PC-9 (cell line): ENCODE measurements at regions of chr22 and their contacts with region 1.

Region 1: DNA sequence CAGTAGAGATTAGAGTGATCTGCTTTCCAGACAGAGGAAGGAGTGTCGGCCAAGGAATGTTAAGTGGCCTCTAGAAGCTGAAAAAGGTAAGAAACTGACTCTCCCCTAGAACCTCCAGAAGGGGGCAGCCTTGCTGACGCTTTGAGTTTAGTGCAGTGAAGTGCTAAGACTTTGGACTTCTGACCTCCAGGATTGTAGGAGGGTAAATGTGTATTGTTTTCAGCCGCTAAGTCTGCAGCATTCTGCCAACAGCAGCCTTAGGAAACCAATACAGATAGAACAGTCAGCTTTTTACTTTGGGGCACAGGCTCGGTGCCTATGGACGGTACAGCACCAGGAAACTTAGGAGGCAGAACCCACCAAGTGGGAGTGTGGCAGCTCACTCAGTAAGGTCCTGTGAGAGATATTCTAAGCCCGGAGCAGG is 3.6 kb upstream of the TBC1D22A start:
- DNase-seq: peak; percentile 54 to 73
- H3K4me3 ChIP-seq: no peak overlapping the region
- H3K27ac ChIP-seq: no peak overlapping the region
- H3K4me1 ChIP-seq: peaks cover 27% of the 10 kb centered on the region
- H3K27me3 ChIP-seq: no peaks in the 10 kb centered on the region
- CTCF ChIP-seq: peak; percentile 86

Region 2: DNA sequence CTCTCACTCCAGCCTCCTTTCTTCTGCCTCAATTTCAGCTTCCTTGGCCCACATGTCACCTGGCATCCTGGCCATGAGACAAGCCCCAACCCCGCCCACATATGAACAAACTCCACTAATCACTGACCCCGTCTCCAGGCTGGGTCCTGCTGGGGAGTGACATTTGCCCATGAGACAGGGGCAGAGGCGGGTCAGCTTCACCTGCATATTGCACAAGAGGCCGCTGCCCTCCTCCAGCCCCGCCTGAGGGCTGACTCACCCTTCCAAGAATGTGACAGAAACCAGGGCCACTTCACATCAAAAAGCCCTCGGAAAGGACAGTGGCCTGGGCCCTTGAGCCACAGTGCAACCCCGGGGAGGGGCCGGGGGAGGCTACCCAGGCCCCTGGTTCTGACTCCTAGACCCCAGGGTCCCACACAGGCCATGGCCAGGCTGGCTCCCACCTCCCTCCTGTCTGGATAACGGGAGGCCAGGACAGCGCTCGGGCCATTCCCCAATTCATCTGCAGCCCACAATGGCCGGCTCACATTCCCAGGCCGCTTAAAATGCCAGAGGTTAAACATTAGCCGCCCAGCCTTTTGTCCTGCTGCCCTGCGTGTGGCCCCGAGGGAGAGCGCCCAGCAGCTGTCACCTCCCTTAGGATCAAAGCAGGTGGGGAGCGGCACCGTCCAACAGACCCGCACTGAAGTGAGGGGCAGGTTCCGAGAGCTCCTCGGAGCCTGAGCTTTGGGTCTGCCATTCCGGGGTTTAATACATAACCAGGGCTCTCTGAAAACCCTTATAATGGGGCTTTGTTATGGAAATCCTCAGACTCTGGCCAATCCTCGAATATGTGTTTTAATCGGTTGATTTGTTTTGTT is 381.1 kb before region 1 on chr22:
- CTCF ChIA-PET with region 1: no interaction called
- POLR2A ChIA-PET with region 1: no interaction called
- intact Hi-C with region 1: loop called (anchors 5 kb)
- DNase-seq: peak; percentile 94 to 96
- H3K4me3 ChIP-seq: peak overlapping the region; percentile 39; the same call in 1 of the 2 replicates
- H3K27ac ChIP-seq: peak overlapping the region; percentile 95
- H3K4me1 ChIP-seq: peaks cover 67% of the 10 kb centered on the region
- H3K27me3 ChIP-seq: no peaks in the 10 kb centered on the region
- CTCF ChIP-seq: no peak

Region 3: DNA sequence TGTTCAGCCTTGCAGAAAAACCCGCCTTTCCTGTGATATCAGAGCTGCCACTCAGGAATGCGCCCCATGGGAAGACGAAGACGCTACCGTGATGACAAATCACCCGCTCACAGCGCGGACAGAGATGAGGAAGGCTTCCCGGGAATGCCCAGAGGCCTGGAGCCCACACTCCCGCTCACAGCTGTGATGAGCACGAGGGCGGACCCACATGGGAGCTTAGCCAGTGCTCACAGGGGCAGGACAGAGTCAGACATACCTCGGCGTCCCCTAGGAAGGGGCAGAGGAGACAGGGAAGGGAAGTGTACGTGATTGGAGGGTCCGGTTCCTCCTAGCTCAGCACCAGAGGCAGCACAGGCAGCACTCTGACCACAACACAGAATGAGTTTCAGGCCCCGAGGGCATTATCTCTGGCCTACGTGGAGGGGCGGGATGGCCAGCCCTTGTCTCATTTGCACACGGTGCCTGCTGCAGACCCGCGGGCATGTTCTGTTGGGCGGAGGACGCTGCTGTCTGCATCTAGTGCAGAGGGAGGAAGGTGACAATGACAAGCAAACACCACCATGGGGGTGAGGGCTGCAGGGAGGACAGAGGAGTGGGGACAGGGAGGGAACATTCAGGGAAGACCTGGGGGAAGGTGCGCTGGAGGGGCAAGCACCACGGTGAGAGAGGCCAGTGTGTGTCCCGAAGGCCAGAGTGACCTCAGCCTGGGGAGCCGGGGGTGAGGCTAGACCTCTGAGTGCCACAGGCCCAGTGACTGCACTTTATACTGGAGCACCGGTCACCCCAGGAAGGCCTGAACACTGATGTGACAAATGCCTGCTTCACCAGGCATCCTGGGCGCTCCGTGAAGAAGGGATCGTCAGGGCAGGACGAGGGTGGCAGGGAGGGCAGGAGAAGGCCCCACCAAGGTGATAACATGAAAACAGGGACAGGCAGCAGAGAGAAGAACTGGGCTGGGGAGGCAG is 301.1 kb before region 1 on chr22:
- CTCF ChIA-PET with region 1: no interaction called
- POLR2A ChIA-PET with region 1: no interaction called
- intact Hi-C with region 1: loop called (anchors 5 kb)
- DNase-seq: peak; percentile 78 to 88
- H3K4me3 ChIP-seq: no peak overlapping the region
- H3K27ac ChIP-seq: peak overlapping the region; percentile 68
- H3K4me1 ChIP-seq: peaks cover 53% of the 10 kb centered on the region
- H3K27me3 ChIP-seq: no peaks in the 10 kb centered on the region
- CTCF ChIP-seq: no peak

Region 4: DNA sequence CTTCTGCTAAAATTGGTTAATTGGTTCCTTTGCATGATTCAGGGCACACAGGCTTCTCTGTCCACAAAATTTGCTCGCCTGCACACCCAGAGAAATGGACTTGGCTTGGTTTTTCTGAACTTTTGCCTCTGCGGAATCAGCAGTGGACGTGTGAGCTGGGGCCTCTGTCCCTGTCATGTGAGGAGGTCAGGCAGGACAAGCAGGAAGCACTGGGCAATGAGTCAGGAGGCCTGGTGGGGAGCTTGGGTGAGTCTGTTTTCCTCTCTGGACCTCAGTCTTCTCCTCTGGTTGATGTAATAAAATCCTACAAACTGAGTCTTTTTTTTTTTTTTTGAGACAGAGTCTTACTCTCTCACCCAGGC is 211.0 kb before region 1 on chr22:
- CTCF ChIA-PET with region 1: no interaction called
- POLR2A ChIA-PET with region 1: no interaction called
- intact Hi-C with region 1: loop called (anchors 5 kb)
- DNase-seq: peak; percentile 68 to 89
- H3K4me3 ChIP-seq: no peak overlapping the region
- H3K27ac ChIP-seq: peak overlapping the region; percentile 72
- H3K4me1 ChIP-seq: peaks cover 45% of the 10 kb centered on the region
- H3K27me3 ChIP-seq: no peaks in the 10 kb centered on the region
- CTCF ChIP-seq: no peak

Region 5: DNA sequence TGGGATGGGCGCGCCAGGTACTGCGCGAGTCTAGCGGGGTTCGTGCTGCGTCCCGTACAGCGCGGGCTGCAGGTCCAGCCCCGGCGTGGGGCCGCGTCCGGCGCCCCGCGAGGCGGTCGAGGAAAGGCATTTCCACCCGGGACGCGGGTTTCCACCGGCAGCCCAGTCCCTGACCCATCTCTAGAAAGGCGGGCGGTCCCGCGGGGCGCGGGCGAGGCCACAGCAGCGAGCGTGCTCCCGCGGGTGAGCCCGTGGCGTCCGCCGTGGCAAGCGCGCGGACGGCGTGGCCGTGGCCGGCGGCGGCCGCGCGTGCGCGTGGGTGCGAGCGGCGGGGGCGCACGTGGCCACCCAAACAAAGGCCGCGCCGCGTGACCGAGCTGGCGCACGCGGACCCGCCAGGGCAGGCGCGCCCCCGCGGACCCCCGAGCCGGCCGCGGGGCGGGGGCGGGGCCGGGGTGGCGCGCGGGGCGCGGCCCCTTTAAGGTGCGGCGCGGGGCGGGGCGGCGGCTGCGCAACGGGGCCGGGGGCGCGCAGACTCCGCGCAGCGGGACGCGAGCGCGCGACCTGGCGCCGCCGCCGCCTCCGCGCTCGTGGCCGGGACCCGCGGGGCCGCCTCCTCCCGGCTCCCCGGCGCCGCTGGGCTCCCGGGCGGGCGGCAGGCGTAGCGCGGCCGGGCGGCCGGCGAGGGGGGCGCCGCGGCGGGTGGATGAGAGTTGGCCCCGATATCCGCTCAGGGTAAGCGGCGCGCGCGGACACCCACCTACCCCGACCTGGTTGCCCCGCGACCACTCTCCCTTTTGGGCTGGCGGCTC is 182.1 kb before region 1 on chr22:
- CTCF ChIA-PET with region 1: no interaction called
- POLR2A ChIA-PET with region 1: no interaction called
- intact Hi-C with region 1: no loop called
- DNase-seq: peak in 1 of 2 experiments; percentile 61
- H3K4me3 ChIP-seq: peak overlapping the region; percentile 70
- H3K27ac ChIP-seq: peak overlapping the region; percentile 85
- H3K4me1 ChIP-seq: peaks cover 45% of the 10 kb centered on the region
- H3K27me3 ChIP-seq: no peaks in the 10 kb centered on the region
- CTCF ChIP-seq: no peak

Region 6: DNA sequence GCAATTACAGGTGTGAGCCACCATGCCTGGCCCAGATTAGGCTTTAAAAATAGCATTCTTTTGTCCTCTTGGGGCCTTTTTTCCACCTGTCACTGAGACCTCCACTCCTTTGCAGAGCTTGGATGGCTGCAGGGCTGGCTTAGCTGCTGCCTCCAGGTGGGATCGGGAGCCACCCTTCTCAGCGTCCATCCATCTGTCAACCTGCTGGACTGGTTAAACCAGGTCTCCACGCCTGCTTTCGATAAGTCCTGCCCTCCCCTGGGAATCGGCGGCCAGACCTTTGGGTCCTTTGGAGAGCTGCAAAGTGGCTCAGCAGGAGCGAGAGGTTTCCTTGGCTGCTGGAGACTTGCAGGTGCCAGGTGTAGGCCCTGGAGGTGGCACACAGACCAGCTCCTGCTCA is 162.1 kb before region 1 on chr22:
- CTCF ChIA-PET with region 1: no interaction called
- POLR2A ChIA-PET with region 1: no interaction called
- intact Hi-C with region 1: loop called (anchors 5 kb)
- DNase-seq: peak; percentile 89 to 96
- H3K4me3 ChIP-seq: no peak overlapping the region
- H3K27ac ChIP-seq: peak overlapping the region; percentile 46
- H3K4me1 ChIP-seq: peaks cover 33% of the 10 kb centered on the region
- H3K27me3 ChIP-seq: no peaks in the 10 kb centered on the region
- CTCF ChIP-seq: peak; percentile 74

Region 7: DNA sequence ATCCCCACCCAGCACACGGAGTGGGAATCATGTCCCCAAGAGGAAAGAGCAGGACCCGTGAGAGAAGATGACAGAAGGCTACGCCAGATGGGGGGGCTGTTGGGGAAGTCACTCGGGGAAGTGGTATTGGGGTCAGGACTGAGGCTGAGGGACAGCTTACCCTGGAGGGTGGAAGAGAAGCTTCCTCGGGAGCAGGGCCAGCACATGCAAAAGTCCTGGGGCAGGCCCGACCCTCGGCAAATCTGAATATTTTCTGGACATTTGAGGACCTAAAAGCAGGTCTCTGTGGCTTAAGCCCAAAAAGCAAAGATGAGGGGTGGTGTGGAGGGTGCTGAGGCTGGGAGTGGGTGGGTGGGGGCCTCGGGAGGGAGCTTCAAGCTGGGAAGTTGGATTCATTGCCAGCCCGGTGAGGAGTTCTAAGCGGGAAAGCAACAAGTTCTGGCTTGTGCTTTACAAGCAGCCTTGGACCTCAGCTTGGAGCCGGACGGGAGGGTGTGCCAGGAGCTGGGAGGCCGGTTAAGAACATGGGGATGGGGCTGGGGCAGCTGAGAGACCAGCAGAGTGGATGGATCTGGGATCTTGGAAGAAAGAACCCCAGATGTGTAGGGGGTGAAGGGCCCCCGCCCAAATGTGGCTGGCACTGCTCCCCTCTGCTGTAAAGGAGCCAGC is 103.8 kb before region 1 on chr22:
- CTCF ChIA-PET with region 1: no interaction called
- POLR2A ChIA-PET with region 1: interaction called, 14 read pairs
- intact Hi-C with region 1: no loop called
- DNase-seq: no peak
- H3K4me3 ChIP-seq: no peak overlapping the region
- H3K27ac ChIP-seq: no peak overlapping the region
- H3K4me1 ChIP-seq: no peaks in the 10 kb centered on the region
- H3K27me3 ChIP-seq: no peaks in the 10 kb centered on the region
- CTCF ChIP-seq: no peak

Region 8: DNA sequence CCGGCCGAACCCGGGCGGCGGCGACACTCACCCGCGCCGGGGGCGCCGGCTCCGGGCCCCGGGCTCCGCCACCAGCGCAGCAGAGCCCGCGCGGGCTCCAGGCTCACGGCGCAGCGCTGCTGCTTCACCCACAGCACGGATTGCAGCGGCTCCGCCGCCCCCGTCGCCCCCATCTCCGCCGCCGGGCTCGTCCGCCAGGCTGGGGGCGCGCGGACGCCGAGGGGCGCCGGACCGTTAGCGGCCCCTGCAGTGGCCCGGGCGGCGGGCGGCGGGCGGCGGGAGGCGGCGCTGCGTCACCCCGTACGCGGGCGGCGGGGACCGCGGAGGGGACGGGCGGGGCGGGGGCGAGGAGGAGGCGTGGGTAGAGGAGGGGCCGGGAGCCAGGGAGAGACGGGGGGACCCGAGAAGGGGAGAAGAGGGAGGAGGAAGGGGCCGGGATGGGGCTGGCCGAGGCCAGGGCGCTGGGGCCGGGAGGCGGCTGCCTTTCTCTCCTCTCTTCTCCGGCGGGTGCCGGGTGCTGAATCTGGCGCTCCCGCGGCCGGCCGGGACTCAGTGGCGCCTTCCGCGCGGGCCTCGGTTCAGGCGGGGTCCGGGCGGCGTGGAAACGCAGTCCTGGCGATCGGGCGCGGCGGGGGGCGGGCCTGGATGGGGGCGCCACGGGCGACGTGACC is 20.8 kb before region 1 on chr22 and contains the start of gene CERK:
- CTCF ChIA-PET with region 1: interaction called, 5 read pairs
- POLR2A ChIA-PET with region 1: no interaction called
- intact Hi-C with region 1: loop called (anchors 2 kb)
- DNase-seq: peak in 1 of 2 experiments; percentile 59
- H3K4me3 ChIP-seq: peak within 1 kb of the TSS; percentile 81
- H3K27ac ChIP-seq: no peak within 1 kb of the TSS
- H3K4me1 ChIP-seq: peaks cover 50% of the 10 kb centered on the region
- H3K27me3 ChIP-seq: no peaks in the 10 kb centered on the region
- CTCF ChIP-seq: no peak
- total RNA-seq, gene CERK: 24.9 and 25.9 TPM in 2 replicates